BJ (cell line): ENCODE measurements at regions of chr14 and their contacts with region 1.

Region 1: GRCh38 chr14:68586896-68587751 is 205.7 kb downstream of the ZFP36L1 start:
- DNase-seq: no peak
- H3K4me3 ChIP-seq: no peak overlapping the region
- H3K27me3 ChIP-seq: no peaks in the 10 kb centered on the region
- CTCF ChIP-seq: no peak

Region 2: GRCh38 chr14:68308726-68309475 is 278.2 kb before region 1 on chr14:
- CTCF ChIA-PET with region 1: no interaction called
- POLR2A ChIA-PET with region 1: interaction called, 10 read pairs
- DNase-seq: no peak
- H3K4me3 ChIP-seq: no peak overlapping the region
- H3K27me3 ChIP-seq: no peaks in the 10 kb centered on the region
- CTCF ChIP-seq: no peak

Region 3: DNA sequence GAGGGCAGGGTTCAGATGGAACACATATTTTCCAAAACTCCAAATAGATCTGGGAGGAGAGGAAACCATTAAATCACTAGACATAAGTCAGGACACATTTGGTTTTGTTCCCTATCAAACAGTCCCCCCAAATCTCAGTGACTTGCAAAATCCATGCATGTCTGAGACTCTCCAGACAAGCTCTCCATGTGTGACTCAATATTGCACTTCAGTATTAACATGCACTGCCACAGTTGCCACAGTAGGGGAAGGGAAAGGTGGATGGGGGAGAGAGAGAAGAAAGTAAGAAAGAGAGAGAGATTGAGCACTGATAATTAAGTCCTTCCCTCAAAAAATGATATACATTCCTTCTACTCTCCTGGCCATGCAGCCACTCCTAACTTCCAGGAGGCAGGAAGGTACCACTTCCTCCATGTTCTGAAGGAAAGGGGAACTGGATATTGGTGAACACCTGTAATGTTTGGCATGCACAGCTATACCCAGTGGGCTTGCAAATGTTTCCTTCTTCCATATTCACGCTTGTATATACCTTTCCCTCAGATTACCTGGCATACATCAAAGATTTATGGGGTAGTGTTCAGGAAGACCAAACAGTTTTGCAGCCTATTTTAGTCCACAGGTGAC is 104.2 kb before region 1 on chr14:
- CTCF ChIA-PET with region 1: no interaction called
- POLR2A ChIA-PET with region 1: no interaction called
- DNase-seq: no peak
- H3K4me3 ChIP-seq: no peak overlapping the region
- H3K27me3 ChIP-seq: no peaks in the 10 kb centered on the region
- CTCF ChIP-seq: no peak

Region 4: DNA sequence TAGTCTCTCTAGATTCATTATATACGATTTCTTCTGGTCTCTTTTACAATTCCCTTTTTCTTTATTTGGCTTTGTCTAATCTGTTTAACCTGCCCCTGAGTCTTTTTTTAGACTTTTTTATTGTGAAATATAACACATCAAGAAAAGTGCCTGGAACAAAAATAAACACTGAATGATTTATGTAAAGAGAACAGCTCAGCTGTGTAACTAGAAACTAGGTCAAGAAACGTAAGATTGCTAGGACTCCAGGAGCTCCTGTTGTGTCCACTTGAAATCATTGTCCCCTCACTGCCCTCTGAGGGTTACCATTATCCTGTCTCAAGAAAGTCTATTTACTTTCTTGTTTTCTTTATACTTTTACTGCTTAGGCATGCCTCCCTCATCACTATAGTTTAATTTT is 627.3 kb after region 1 on chr14:
- CTCF ChIA-PET with region 1: no interaction called
- POLR2A ChIA-PET with region 1: no interaction called
- DNase-seq: no peak
- H3K4me3 ChIP-seq: no peak overlapping the region
- H3K27me3 ChIP-seq: no peaks in the 10 kb centered on the region
- CTCF ChIP-seq: no peak